ENCODE measurements at regions of chr5 and their contacts with region 1.

Region 1: DNA sequence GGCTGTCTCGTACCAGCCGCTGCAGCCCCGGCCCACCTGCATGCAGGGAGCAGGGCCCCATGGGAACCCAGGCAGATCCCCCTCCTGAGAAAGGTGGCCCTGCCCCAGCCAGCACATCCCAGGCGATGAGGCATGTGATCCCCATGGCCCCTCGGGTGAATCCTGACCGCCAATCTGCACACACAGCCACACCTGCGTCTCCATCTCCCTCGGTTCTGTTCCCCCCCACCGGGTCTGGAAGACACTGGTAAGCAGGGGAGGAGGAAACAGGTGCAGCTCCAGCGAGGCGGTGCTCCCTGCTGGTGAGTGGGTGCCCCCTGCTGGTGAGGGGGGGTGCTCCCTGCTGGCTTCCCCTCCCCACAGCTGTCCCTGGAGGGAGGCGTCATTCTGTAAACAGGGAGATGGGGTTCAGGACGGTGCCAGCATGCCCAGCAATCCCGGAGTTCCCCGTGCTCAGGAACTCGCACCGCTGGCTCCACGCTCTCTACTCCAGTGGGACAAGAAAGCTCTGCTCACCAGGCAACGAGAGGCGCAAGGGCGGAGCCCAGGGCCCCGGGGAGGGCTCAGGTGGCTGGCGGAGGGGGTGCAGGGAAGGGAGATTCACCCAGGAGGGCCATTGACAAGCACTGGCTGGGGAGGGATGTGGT is 28.4 kb upstream of the SLC12A7 start:
- H3K4me3 ChIP-seq: no peak overlapping the region
- H3K27ac ChIP-seq: no peak overlapping the region
- H3K4me1 ChIP-seq: no peaks in the 10 kb centered on the region
- CTCF ChIP-seq: peak; percentile 87

Region 2: GRCh38 chr5:885529-885928 is 254.8 kb before region 1 on chr5:
- CTCF ChIA-PET with region 1: no interaction called
- POLR2A ChIA-PET with region 1: no interaction called
- H3K4me3 ChIP-seq: no peak overlapping the region
- H3K27ac ChIP-seq: no peak overlapping the region
- H3K4me1 ChIP-seq: no peaks in the 10 kb centered on the region
- CTCF ChIP-seq: no peak

Region 3: GRCh38 chr5:923281-923873 is 216.9 kb before region 1 on chr5:
- CTCF ChIA-PET with region 1: interaction called, 43 read pairs
- POLR2A ChIA-PET with region 1: interaction called, 3 read pairs
- H3K4me3 ChIP-seq: no peak overlapping the region
- H3K27ac ChIP-seq: no peak overlapping the region
- H3K4me1 ChIP-seq: 0 out of 2 replicates have a peak, but pooled peaks cover 2% of the 10 kb centered on the region
- CTCF ChIP-seq: peak; percentile 95

Region 4: GRCh38 chr5:1004461-1005248 is 135.6 kb before region 1 on chr5:
- CTCF ChIA-PET with region 1: interaction called, 13 read pairs
- POLR2A ChIA-PET with region 1: no interaction called
- H3K4me3 ChIP-seq: peak overlapping the region; percentile 38
- H3K27ac ChIP-seq: peak overlapping the region; percentile 63; the same call in 1 of the 2 replicates
- H3K4me1 ChIP-seq: peaks cover 19% of the 10 kb centered on the region
- CTCF ChIP-seq: peak; percentile 90

Region 5: DNA sequence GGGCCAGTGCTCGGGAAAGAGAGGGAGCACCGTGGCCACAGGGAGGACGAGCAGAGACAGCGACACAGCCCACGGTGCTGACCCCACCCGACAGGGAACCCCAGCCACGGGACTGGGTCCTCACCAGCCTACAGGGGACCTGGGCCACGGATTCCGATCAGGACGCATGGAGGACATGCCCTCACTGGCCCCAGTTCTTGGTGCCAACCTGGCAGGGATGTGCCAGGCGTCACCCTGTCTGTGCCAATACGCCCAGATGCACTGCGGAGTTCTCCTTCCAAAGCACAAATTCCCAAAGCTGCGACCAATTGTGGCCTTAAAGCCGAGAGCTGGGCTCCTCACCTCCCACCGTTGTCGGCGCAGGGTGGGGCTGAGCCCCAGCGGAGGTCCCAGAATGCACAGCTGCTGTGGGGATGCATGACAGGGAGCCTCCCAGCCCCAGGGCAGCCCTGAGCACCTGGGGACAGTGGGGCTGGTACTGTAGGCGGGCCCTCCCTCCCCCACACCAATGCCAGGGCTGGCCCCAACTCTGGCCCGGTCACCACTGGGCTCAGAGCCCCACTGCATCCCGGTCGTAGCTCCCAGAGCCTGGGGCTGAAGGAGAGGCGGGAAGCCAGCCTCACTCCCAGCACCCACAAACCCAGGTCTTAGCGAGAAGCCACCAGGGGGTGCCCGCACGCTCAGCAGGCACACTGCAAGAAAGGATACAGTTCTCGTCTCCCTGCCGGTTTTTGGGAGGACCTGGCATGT is 87.5 kb before region 1 on chr5:
- CTCF ChIA-PET with region 1: interaction called, 10 read pairs
- POLR2A ChIA-PET with region 1: no interaction called
- H3K4me3 ChIP-seq: no peak overlapping the region
- H3K27ac ChIP-seq: no peak overlapping the region
- H3K4me1 ChIP-seq: no peaks in the 10 kb centered on the region
- CTCF ChIP-seq: 0 out of 2 replicates have a peak, but pooled peaks have one; percentile 11

Region 6: GRCh38 chr5:1125030-1125357 is 15.3 kb before region 1 on chr5:
- CTCF ChIA-PET with region 1: interaction called, 35 read pairs
- POLR2A ChIA-PET with region 1: interaction called, 3 read pairs
- H3K4me3 ChIP-seq: no peak overlapping the region
- H3K27ac ChIP-seq: no peak overlapping the region
- H3K4me1 ChIP-seq: 0 out of 2 replicates have a peak, but pooled peaks cover 7% of the 10 kb centered on the region
- CTCF ChIP-seq: no peak

Region 7: GRCh38 chr5:1312206-1312605 is 171.9 kb after region 1 on chr5:
- CTCF ChIA-PET with region 1: no interaction called
- POLR2A ChIA-PET with region 1: no interaction called
- H3K4me3 ChIP-seq: no peak overlapping the region
- H3K27ac ChIP-seq: no peak overlapping the region
- H3K4me1 ChIP-seq: peaks cover 14% of the 10 kb centered on the region
- CTCF ChIP-seq: no peak

Region 8: DNA sequence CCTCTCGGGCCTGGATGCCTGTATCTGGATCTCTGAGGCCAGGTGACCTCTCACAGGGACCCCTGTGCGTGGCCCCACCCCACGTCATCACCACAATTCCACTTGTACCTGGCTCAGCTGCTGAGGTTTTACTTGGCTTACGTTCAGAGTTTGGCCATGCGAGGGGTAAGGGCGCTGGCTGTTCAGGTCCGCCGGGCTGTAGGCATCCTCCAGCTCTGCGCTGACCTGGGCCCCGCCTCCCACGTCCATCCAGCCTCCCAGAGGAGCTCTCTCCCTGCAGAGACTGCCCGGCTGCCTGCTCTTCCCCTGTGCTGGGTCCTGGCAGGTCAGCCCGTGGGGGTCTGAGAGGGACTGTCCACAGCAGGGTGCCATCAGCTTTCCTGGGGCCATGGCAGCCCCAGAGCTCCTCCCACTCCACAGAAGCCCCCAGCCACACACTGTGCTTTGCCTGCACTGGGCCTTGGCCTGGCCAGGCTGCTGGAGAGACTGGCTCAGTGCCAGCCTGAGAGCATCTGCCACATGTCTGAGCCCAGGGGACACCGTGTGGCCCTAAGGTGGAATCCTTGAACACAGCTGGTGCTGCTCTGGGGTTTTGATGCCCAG is 261.3 kb after region 1 on chr5:
- CTCF ChIA-PET with region 1: no interaction called
- POLR2A ChIA-PET with region 1: no interaction called
- H3K4me3 ChIP-seq: no peak overlapping the region
- H3K27ac ChIP-seq: no peak overlapping the region
- H3K4me1 ChIP-seq: no peaks in the 10 kb centered on the region
- CTCF ChIP-seq: no peak

Measured in HEK293 (cell line).